Head of caudate nucleus (tissue), 42 donors: ENCODE measurements at regions of chr10 and their contacts with region 1.

Region 1: DNA sequence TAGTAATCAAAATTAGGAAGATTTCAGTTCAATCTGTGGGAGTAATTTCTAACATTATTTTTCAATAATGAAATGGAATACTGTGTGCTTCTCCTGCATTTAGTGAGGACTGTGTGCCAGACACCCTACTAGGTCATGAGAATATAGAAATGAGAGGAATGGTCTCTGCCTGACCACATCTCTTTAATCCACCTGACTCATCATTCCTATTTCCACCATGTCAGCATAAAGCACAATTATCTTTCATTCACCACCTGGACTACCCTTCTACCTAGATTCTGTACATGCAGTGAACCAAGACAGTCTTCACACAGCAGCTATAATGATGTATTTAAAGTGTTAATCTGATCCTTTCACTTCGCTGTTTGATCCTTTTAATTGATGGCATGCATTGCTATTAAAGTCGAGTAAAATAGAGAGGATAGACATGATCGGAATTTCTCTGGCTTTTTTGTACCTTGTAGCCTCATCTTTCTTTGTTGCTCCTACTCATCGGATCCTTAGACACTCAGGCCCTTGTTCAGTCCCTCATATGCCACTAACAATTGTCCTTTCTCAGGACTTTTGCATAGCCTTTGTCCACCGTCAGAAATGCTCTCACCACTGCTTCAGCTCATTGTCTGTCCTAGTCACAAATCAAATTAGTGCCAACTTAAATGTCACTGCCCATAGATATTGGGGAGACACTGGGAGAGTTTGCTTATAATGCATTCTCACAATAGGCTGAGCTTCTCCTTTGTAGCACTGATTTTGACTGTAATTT is 1037.1 kb downstream of the REEP3 start:
- DNase-seq: peak in 20 of 42 donors; percentile 21 to 79 (median 45)

Region 2: GRCh38 chr10:64636461-64636860 is 78.2 kb after region 1 on chr10:
- intact Hi-C with region 1: loop called (anchors 5 kb)
- DNase-seq: peak in 20 of 42 donors; percentile 8 to 73 (median 40)